Right ventricle myocardium inferior (tissue), 1 donor: ENCODE measurements at regions of chr1 and their contacts with region 1.

Region 1: DNA sequence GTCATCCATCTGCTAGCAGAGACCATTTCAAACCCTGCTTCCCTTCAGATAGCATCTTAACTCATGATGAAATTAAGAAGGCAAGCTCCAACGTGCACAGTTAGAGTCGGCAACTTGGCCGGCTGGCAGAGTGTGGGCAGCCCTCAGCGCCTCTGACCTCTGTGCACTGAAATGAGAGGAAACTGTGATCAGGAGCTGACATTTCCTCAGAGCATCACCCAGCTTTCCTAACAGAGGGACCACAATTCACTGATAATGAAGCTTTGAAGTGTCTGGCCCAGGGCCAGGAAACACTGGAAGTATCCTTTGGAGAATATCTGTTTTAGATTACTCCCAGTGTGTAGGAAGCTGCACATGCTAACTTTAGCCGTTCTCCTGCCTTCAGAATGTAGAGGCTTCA is 145.0 kb upstream of the ZC3H11B start:
- DNase-seq: no peak
- ATAC-seq: peak; percentile 61

Region 2: GRCh38 chr1:219489636-219490035 is 268.3 kb before region 1 on chr1:
- intact Hi-C with region 1: no loop called
- DNase-seq: no peak
- ATAC-seq: no peak

Region 3: GRCh38 chr1:219682788-219683187 is 75.1 kb before region 1 on chr1:
- intact Hi-C with region 1: no loop called
- DNase-seq: no peak
- ATAC-seq: peak; percentile 26

Region 4: GRCh38 chr1:219710529-219711194 is 47.2 kb before region 1 on chr1:
- intact Hi-C with region 1: no loop called
- DNase-seq: no peak
- ATAC-seq: no peak

Region 5: DNA sequence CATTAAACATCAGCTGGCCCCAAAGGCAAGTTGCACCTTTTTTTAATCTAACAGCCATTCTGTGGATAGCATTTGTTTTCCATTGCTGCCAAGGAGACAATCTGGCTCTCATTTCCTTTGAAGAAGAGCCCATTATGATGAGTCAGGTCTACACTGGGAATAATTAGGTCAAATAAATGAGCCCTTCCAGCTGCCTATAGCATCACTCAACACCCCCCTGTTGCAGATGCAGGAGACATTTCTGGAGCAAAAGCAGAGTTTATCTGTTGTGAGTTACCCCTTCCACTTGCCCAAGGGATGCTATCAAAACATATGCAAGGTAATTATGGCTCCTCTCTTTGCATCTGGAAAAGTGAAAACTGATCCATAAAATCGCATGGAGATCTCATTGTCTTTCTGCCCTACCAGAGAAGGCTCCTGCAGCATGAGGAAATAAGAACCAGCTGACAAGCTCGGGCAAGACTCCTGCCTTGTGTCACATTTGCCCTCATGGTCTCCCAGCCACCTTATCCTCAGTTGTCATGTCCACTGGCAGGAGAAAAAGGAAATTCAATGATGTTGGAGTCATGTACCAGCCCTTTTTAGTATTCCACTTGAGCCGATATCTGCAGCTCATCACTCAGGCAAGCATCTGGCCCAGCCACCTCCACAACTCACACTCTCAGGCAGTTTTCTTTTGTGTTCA is 34.6 kb after region 1 on chr1:
- intact Hi-C with region 1: loop called (anchors 5 kb)
- DNase-seq: no peak
- ATAC-seq: peak; percentile 70